ENCODE measurements at regions of chr2 and their contacts with region 1.

Region 1: DNA sequence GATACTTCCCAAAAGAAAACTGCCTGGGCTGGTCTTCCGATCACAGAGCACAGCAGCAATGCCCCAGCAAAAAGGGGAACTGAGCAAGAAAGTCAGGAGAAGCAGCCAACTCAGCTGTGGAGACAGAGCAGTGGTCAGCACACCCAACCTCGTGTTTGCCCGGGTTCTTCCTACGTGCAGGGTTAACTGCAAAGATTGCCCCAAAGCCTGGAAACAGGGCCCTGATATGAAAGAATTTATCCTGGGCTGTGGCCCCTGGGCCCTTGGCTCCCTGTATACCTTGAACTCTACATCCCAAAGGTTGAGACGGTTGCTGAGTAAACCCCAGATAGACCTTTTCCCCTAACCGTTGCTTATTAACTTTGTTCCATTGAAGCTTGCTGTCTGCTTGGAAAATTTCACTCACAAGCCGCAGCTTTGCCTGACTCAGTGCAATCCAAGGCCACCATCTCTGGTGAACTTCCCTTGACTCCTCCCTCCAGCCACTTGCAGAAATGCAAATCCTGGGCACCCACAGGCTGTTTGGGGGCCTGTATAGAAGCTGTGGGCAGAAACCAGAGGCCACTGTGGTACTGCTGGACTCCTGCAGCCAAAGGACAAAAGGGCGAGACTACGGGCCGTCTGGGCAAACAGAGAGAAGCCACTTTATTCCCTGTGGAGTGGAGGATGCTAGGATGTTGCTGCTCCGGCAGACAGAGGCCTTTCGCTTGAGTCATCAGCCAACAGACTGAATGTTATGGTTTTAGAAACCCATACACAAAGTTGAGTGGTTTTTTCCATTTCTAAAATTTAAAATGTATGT is 18.2 kb downstream of the NRP2 start:
- DNase-seq: no peak
- CTCF ChIP-seq: no peak

Region 2: DNA sequence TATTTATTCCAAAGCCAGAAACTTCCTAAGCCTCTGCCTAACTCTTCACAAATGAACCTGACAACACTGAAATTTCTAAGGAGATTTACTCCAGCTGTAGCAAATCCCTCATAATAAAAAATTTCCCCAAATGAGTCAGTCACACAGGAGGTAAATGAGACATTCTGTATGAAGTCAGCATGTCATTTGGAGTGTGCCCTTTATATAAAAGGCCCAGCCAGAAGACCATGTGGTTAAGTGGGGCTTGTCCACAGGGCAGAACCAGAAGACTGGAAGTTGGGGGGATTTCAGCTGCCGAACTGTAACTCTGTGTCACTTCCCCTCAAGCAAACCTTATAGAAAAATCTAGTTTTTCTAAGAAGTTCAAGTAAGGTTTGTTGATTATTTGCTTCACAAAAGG is 12.0 kb after region 1 on chr2:
- CTCF ChIA-PET with region 1: interaction called, 10 read pairs
- POLR2A ChIA-PET with region 1: no interaction called
- DNase-seq: no peak
- CTCF ChIP-seq: no peak

Region 3: GRCh38 chr2:205785507-205786260 is 85.2 kb after region 1 on chr2:
- CTCF ChIA-PET with region 1: no interaction called
- POLR2A ChIA-PET with region 1: no interaction called
- DNase-seq: no peak
- CTCF ChIP-seq: no peak